K562 (cell line): ENCODE measurements at regions of chr22 and their contacts with region 1.

Region 1: DNA sequence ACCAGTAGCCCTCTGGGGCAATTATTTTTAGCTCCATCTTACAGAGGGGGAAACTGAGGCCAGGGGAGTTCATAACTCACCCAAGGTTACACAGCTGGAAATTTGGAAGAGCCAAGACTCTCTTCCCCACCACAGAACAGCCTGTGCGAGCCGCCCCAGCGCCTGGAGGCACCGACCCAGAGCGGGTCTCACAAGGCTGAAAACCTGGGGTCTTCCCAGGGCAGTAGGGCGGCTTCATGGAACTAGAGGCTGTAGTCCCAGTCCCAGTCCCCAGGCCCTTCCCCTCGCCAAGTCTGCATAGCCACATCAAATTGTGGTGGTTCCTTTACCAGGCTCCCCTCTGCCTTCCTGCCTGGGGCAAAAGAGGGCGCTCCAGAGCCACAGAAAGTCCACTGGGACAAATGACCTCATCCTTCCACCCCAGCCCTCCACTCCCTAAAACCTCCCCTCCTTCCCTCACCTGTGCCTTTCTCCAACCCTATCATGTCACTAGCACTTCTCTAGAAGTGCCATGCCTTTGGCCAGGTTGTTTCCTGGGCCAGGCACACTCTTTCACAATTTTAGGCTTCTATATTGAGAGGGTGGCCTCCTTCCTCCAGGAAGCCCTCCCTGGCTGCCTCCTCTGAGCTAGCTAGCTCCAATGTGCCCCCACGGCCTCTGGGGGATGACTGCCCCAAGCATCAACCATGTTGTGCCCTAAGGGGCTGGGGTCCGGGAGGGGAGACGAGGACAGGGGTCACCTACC is 15.2 kb upstream of the CDC42EP1 start:
- DNase-seq: peak in 3 of 4 experiments; percentile 36 to 72 (median 71)
- ATAC-seq: peak; percentile 95
- H3K4me3 ChIP-seq: no peak overlapping the region
- H3K27ac ChIP-seq: no peak overlapping the region
- H3K4me1 ChIP-seq: peaks cover 0 to 21% of the 10 kb centered on the region in 2 experiments; a peak in 2 of 5 replicates
- H3K27me3 ChIP-seq: no peaks in the 10 kb centered on the region
- CTCF ChIP-seq: peak; percentile 82 to 92 (median 87)
- EP300 ChIP-seq: no peak
- POLR2A ChIP-seq: no peak
- RAD21 ChIP-seq: peak; percentile 74 to 92

Region 2: DNA sequence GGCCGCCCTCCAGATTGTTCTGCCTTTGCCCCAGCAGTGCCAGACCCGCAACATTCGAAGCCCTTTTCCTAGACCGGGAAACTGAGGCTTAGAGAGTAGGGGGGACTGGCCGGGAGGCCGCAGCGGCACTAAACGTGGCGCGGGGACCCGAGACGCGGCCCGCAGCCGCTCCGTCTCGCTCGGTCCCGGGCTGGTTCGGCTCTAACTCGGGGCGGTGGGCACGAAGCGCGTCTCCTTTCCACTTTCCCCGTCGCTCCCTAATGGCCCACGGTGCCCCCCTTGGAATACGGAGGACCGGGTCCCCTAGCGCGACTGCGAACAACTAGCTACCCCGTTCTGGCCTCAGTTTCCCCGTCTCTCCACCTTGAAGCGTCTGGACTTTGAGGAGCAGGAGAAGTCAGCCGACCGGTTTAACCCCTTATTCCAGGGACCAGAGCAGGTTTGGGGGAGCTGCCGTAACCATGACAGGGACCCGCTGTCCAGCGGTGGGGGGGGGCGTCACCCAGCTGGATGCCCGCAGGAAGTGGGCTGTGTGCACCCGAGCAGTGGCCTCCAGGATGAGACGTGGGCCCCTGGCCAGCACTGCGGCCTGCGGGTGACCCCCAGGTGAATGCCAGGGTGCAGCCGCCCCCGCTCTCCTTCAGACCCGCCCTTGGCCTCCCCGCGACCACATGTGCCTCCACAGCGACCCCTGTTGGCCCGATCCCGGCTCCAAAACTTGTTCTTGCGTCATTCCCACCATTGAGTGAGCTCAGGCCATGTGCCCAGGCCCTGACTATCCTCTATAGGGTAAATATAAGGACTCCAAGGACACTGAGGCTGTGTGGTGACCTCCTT is 16.3 kb after region 1 on chr22:
- CTCF ChIA-PET with region 1: interaction called, 18 read pairs
- POLR2A ChIA-PET with region 1: interaction called, 9 read pairs
- in situ Hi-C with region 1: no loop called
- intact Hi-C with region 1: no loop called
- DNase-seq: peak; percentile 75 to 92 (median 84)
- ATAC-seq: peak; percentile 69
- H3K4me3 ChIP-seq: peak overlapping the region; percentile 83
- H3K27ac ChIP-seq: peak overlapping the region; percentile 97
- H3K4me1 ChIP-seq: peaks cover 26 to 45% of the 10 kb centered on the region in 2 experiments
- H3K27me3 ChIP-seq: no peaks in the 10 kb centered on the region
- CTCF ChIP-seq: peak; percentile 70 to 84 (median 73)
- EP300 ChIP-seq: no peak
- POLR2A ChIP-seq: peak; percentile 61; the same call in 1 of the 2 replicates
- RAD21 ChIP-seq: peak; percentile 27 to 36

Region 3: DNA sequence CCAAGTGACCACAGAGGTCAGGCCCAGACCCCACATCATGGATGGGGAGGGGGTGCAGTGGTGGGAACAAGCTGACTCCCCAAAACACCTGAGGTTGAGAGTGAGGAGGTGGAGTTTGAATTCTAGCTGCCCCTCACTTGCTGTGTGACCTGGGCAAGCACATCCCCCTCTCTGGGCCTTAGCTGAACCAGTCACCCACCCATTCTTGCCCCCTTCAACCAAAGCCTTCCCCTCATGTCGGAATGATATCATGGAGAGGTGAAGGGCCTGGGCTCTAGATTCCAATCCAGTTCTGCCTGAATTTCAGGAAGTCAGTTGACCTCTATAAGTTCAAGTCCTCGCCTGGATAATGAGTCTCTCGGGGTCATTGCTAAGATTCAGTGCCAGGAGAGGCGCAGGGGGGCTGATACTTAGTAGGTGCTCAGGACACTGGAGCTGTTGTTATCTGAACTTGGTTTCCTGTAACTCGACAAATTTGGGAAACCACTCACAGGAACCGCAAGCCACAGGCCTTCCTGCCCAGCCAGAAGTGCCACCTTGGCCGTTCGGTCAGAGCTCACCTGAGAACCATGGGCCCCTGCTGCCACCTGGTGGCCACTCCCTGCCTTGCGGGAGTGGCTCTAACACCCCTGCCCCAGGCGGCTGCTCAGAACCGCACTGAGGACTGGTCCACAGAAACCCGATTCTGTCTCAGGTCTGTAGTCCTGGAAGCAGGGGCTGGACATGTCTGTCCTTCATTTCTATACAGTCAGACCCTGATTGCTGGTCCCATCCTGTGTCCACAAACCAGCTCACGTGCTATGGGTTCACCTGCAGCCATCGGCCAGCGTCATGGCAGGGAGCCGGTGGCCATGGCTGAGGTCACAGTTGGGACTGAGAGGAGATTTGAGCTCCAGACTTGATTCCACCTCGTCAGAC is 22.0 kb after region 1 on chr22:
- CTCF ChIA-PET with region 1: interaction called, 18 read pairs
- POLR2A ChIA-PET with region 1: interaction called, 11 read pairs
- in situ Hi-C with region 1: no loop called
- intact Hi-C with region 1: loop called (anchors 1 kb)
- DNase-seq: peak in 3 of 4 experiments; percentile 44 to 74 (median 66)
- ATAC-seq: peak; percentile 49
- H3K4me3 ChIP-seq: no peak overlapping the region
- H3K27ac ChIP-seq: no peak overlapping the region
- H3K4me1 ChIP-seq: peaks cover 25 to 49% of the 10 kb centered on the region in 2 experiments
- H3K27me3 ChIP-seq: no peaks in the 10 kb centered on the region
- CTCF ChIP-seq: peak; percentile 74 to 86 (median 75)
- EP300 ChIP-seq: no peak
- POLR2A ChIP-seq: 0 out of 2 replicates have a peak, but pooled peaks have one; percentile 20
- RAD21 ChIP-seq: peak; percentile 57 to 69

Region 4: DNA sequence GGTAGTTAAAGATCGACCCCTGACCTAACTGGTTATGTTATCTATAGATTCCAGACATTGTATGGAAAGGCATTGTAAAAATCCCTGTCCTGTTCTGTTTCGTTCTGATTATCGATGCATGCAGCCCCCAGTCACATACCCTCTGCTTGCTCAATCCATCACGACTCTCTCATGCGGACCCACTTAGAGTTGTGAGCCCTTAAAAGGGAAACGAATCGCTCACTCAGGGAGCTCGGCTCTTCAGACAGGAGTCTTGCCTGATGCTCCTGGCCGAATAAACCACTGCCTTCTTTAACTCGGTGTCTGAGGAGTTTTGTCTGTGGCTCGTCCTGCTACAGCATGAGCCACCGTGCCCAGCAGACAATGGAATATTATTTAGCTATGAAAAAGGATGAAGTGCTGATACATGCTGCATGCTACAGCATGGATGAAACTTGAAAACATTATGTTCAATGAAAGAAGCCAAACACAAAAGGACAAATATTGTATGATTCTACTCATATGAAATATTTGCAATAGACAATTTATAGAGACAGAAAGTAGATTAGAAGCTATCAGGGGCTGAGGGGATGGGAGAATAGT is 46.8 kb after region 1 on chr22:
- CTCF ChIA-PET with region 1: interaction called, 15 read pairs
- POLR2A ChIA-PET with region 1: interaction called, 5 read pairs
- in situ Hi-C with region 1: no loop called
- intact Hi-C with region 1: loop called (anchors 1 kb)
- DNase-seq: no peak
- ATAC-seq: no peak
- H3K4me3 ChIP-seq: no peak overlapping the region
- H3K27ac ChIP-seq: no peak overlapping the region
- H3K4me1 ChIP-seq: no peaks in the 10 kb centered on the region; a peak in 2 of 5 replicates
- H3K27me3 ChIP-seq: peaks cover 2 to 12% of the 10 kb centered on the region in 2 experiments; a peak in 3 of 5 replicates
- CTCF ChIP-seq: no peak
- EP300 ChIP-seq: no peak
- POLR2A ChIP-seq: no peak
- RAD21 ChIP-seq: no peak

Region 5: DNA sequence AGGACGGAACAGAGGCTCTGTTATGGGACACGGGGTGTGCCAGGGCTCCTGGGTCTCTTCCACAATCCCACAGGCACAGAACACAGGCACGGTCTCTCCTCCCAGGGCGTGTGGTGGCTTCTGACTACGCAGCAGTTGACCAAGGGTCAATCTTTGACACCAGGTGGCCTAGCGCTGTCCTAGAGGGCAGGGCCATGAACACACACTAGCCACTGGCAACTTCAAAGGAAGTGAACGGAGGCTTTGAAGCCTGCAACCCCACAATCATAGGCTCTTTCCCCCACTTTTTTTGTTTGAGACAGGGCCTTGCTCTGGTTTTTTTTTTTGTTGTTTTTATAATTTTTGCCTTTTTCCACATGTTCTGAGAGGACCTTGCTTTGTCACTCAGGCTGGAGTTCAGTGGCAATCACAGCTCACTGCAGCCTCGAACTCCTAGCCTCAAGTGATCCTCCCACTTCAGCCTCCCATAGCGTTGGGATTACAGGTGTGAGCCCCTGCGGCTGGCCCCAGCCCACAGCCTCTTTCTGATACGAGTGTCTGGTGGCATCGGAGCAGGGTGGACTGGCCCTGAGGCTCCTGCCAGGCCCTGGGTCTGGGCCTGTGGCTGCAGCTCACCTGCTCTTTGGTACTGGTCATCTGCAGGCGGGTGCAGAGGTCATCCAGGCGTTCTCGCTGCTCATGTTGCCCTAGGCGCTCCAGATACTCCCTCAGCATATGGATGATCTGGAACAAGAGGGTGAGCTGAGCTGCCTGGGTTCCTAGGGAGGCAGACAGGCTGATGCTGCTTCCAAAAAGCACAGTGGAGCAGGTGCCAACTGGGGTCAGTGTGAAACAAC is 287.1 kb after region 1 on chr22:
- CTCF ChIA-PET with region 1: no interaction called
- POLR2A ChIA-PET with region 1: no interaction called
- in situ Hi-C with region 1: no loop called
- intact Hi-C with region 1: no loop called
- DNase-seq: no peak
- ATAC-seq: no peak
- H3K4me3 ChIP-seq: no peak overlapping the region
- H3K27ac ChIP-seq: no peak overlapping the region
- H3K4me1 ChIP-seq: no peaks in the 10 kb centered on the region; a peak in 1 of 5 replicates
- H3K27me3 ChIP-seq: no peaks in the 10 kb centered on the region
- CTCF ChIP-seq: no peak
- EP300 ChIP-seq: no peak
- POLR2A ChIP-seq: no peak
- RAD21 ChIP-seq: no peak

Region 6: GRCh38 chr22:37972527-37972926 is 427.4 kb after region 1 on chr22:
- CTCF ChIA-PET with region 1: no interaction called
- POLR2A ChIA-PET with region 1: no interaction called
- in situ Hi-C with region 1: loop called (anchors 10 kb)
- intact Hi-C with region 1: no loop called
- DNase-seq: no peak
- ATAC-seq: no peak
- H3K4me3 ChIP-seq: no peak overlapping the region
- H3K27ac ChIP-seq: no peak overlapping the region
- H3K4me1 ChIP-seq: peaks cover 0 to 7% of the 10 kb centered on the region in 2 experiments; a peak in 2 of 5 replicates
- H3K27me3 ChIP-seq: no peaks in the 10 kb centered on the region
- CTCF ChIP-seq: no peak
- EP300 ChIP-seq: no peak
- POLR2A ChIP-seq: no peak
- RAD21 ChIP-seq: no peak